Left ventricle myocardium inferior (tissue), 1 donor: ENCODE measurements at regions of chr2 and their contacts with region 1.

Region 1: GRCh38 chr2:6773007-6773693 is 92.6 kb downstream of the CMPK2 start:
- DNase-seq: peak; percentile 52
- H3K4me3 ChIP-seq: peak overlapping the region; percentile 35
- H3K27ac ChIP-seq: no peak overlapping the region
- H3K4me1 ChIP-seq: peaks cover 13% of the 10 kb centered on the region
- H3K27me3 ChIP-seq: peaks cover 34% of the 10 kb centered on the region
- CTCF ChIP-seq: peak; percentile 98

Region 2: GRCh38 chr2:6352906-6353515 is 420.1 kb before region 1 on chr2:
- intact Hi-C with region 1: loop called (anchors 5 kb)
- DNase-seq: peak; percentile 34
- H3K4me3 ChIP-seq: no peak overlapping the region
- H3K27ac ChIP-seq: no peak overlapping the region
- H3K4me1 ChIP-seq: no peaks in the 10 kb centered on the region
- H3K27me3 ChIP-seq: peaks cover 6% of the 10 kb centered on the region
- CTCF ChIP-seq: peak; percentile 78

Region 3: GRCh38 chr2:6556755-6557154 is 216.4 kb before region 1 on chr2:
- intact Hi-C with region 1: no loop called
- DNase-seq: no peak
- H3K4me3 ChIP-seq: no peak overlapping the region
- H3K27ac ChIP-seq: no peak overlapping the region
- H3K4me1 ChIP-seq: no peaks in the 10 kb centered on the region
- H3K27me3 ChIP-seq: peaks cover 17% of the 10 kb centered on the region
- CTCF ChIP-seq: no peak

Region 4: DNA sequence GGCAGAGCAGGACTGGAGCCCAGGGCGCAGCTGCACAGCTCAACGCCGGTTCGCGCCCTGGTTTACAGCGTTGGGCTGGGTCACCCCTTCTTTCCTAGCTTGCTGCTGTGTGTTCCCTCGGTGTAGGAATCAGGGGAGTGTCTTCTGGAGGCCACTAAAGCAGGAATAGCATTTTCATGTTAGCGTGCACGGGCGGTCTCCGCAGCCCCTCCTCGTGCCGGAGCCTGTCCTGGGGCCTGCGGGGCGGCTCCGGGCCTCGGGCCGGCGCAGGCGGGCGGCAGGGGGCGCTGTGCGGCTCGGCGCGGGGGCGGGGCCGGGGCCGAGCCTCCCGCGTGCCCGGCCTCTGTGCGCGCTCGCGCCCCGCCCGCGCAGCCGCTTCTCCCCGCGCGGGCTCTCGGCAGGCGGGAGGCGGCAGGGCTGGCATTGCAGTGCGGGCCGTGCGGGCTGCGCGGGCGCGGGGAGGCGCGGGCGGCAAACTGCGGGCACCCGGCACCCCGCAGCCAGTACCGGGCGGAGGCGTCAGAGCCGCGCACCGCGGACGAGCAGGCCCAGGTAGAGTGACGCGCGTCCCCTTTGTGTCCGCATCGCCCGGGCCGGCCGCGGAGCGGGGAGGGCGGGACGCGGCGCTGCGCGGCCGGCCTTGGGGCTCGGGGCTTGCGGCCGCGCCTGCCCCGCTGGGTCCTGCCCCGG is 144.1 kb after region 1 on chr2 and contains the start of gene RNF144A:
- intact Hi-C with region 1: no loop called
- DNase-seq: peak; percentile 71
- H3K4me3 ChIP-seq: peak within 1 kb of the TSS; percentile 91
- H3K27ac ChIP-seq: peak within 1 kb of the TSS; percentile 85
- H3K4me1 ChIP-seq: peaks cover 47% of the 10 kb centered on the region
- H3K27me3 ChIP-seq: no peaks in the 10 kb centered on the region
- CTCF ChIP-seq: peak; percentile 63
- total RNA-seq, gene RNF144A: 17.9 TPM

Region 5: GRCh38 chr2:7379802-7380201 is 606.7 kb after region 1 on chr2:
- intact Hi-C with region 1: no loop called
- DNase-seq: no peak
- H3K4me3 ChIP-seq: no peak overlapping the region
- H3K27ac ChIP-seq: no peak overlapping the region
- H3K4me1 ChIP-seq: peaks cover 8% of the 10 kb centered on the region
- H3K27me3 ChIP-seq: peaks cover 25% of the 10 kb centered on the region
- CTCF ChIP-seq: no peak